Body of pancreas (tissue), 4 donors: ENCODE measurements at regions of chr10 and their contacts with region 1.

Region 1: DNA sequence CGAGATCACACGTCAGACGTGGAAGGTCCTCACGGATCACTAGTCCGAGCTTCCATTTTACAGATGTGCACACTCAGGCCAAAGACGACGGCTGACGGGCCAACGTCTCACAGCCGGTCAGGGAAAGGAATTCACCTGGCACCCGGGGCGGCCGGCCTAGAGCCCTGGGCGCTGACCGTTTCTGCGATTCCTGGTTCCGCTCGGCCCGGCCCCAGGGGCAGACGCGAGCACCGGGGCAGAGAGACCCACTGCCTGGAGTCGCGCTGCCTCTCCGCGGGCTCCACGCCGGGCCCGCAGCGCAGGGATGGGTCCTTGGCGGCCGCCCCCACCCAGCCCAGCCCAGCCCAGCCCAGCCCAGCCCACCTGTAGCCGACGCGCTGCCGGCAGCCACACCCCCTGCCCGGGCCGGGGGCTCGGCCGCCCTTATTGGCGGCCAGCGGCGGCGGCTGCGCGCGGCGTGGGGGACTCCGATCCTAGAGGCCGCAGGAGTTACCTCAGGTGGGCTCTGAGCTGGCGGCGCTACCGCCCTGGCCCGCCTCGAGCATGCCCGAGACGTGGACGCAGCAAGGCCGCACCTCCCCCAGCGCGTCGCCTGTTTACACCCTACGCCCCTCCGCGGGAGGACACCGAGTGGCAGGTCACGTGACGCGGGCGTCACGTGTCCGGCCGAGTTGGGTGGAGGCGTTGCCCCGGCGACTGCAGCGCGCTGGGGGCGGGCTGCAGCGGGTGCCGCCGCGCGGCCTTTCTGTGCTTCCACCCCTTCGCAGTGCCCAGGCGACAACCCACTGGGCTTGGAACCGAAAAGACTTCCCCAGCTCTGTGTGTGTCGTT is 78.1 kb downstream of the ZFAND4 start:
- DNase-seq: peak; percentile 93 to 96 (median 94)
- ATAC-seq: peak; percentile 95
- H3K4me3 ChIP-seq: peak overlapping the region; percentile 83 to 84
- H3K27ac ChIP-seq: peak overlapping the region; percentile 70 to 90 (median 85)
- H3K4me1 ChIP-seq: peaks cover 20% of the 10 kb centered on the region
- H3K27me3 ChIP-seq: no peaks in the 10 kb centered on the region
- CTCF ChIP-seq: peak in 2 of 7 experiments; percentile 25 to 38
- POLR2A ChIP-seq: peak; percentile 36 to 68 (median 64)

Region 2: GRCh38 chr10:45470098-45471012 is 124.1 kb before region 1 on chr10:
- intact Hi-C with region 1: loop called (anchors 10 kb)
- DNase-seq: no peak
- ATAC-seq: peak; percentile 42
- H3K4me3 ChIP-seq: no peak overlapping the region
- H3K27ac ChIP-seq: peak overlapping the region in 2 of 4 donors; percentile 19 to 51
- H3K4me1 ChIP-seq: peaks cover 35% of the 10 kb centered on the region
- H3K27me3 ChIP-seq: no peaks in the 10 kb centered on the region
- CTCF ChIP-seq: no peak
- POLR2A ChIP-seq: no peak